ENCODE measurements at regions of chr10 and their contacts with region 1.

Region 1: DNA sequence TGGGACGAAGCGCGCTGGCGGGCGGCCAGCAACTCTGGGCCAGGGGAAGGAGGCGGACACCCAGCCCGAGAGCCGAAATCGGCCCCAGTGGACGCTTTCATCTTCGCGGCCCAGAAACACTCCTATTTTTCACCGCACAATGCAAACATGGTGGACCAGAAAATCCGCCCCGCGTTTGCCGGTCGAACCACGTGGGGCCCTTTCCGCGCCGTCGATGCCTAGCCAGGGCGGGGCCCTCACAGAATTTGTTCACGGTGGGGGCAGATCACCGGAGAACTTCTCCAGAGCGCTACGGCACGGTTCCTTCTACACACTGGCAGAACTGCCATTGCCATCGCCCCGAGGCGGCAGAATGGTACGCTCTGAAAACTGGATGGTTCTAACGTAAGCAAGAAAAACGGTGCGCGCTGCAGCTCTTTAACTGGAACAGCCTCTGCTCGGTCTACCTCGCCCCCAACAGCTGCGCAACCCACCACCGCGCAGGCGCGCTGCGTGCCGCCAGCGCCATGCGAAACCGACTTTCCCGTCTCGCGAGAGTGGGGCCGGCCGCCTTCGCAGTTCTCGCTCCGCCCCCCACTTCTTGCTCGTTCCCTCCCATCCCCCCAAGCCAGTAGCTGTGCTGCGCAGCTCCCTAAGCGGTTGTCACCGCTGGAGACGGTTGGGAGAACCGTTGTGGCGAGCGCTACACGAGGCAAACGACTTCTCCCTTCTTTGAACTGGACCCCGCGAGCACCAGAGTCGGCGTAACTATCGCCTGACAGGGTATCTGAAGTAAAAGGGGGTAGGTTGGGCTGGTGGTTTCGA is at the start of gene HNRNPH3:
- DNase-seq: peak; percentile 99
- ATAC-seq: peak; percentile 88
- H3K4me3 Mint-ChIP-seq: peak within 1 kb of the TSS; percentile 97
- H3K27ac Mint-ChIP-seq: peak within 1 kb of the TSS; percentile 100
- H3K4me1 Mint-ChIP-seq: peaks cover 41% of the 10 kb centered on the region
- H3K27me3 Mint-ChIP-seq: no peaks in the 10 kb centered on the region
- total RNA-seq, gene HNRNPH3: 126 to 157 TPM

Region 2: DNA sequence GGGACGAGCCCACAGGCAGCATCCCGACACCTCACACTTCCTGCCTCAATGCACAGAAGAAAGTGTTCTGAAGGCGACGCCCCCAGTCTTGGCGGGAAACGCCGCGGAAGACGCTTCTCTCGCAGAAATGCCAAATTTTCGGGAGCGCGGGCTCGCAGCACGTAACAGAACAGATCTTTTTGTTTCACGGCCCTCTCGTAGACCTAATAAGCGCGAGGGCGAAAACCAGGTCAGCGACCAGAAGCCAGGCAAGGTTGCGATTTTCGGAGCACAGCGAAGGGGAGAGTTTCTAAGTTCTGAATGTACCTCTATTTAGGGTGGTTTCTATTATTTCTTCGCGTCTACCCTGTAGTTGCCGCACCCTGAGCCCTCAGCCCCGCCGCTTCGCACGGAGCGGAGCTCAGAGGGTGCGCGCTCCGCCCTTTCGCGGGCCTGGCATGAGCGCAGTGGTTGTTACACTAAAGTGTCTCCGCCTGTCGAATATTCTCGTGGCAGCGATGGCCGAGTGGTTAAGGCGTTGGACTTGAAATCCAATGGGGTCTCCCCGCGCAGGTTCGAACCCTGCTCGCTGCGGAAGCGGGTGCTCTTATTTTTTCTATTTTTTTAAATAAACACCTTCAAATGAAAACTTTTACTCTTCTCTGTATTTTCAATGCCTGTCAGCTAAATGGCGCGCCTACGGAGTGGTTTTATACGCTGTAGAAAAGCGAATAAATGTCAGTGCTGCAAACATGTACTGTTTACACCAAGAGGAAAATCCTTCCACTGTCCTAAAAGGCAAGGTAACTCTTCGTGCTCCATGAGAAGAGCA is 567.4 kb before region 1 on chr10:
- CTCF ChIA-PET with region 1: no interaction called
- POLR2A ChIA-PET with region 1: no interaction called
- intact Hi-C with region 1: loop called in 1 of 2 experiments (anchors 1 kb)
- DNase-seq: peak; percentile 96
- ATAC-seq: peak; percentile 86
- H3K4me3 Mint-ChIP-seq: peak overlapping the region; percentile 86
- H3K27ac Mint-ChIP-seq: peak overlapping the region; percentile 99
- H3K4me1 Mint-ChIP-seq: peaks cover 15% of the 10 kb centered on the region
- H3K27me3 Mint-ChIP-seq: peaks cover 2% of the 10 kb centered on the region

Region 3: DNA sequence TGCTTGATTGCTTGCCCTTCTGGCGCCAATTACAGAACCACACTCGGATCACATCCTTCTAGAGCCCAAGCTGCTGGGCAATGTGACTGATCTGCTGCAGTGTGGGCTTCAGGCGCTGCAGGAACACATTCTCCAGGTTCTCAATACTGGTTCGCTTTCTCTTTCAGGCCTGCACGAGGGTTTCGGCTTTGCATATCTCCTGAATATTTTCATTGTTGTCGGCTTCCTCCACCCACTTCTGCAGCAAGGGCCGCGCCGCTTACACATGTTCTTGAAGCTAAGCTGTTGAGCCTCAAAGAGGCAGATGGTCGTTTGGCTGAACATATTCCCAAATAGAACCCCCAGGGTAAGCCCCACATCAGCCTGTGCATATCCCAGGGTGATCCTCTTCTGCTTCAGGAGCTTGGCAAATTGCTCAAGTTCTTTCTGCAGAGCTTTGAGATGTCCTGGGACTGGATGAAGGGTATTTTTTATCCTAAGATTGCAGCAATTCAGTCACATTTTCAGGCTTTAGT is 321.2 kb before region 1 on chr10:
- CTCF ChIA-PET with region 1: no interaction called
- POLR2A ChIA-PET with region 1: interaction called, 14 read pairs
- intact Hi-C with region 1: no loop called
- DNase-seq: no peak
- ATAC-seq: no peak
- H3K4me3 Mint-ChIP-seq: no peak overlapping the region
- H3K27ac Mint-ChIP-seq: no peak overlapping the region
- H3K4me1 Mint-ChIP-seq: no peaks in the 10 kb centered on the region
- H3K27me3 Mint-ChIP-seq: no peaks in the 10 kb centered on the region

Region 4: DNA sequence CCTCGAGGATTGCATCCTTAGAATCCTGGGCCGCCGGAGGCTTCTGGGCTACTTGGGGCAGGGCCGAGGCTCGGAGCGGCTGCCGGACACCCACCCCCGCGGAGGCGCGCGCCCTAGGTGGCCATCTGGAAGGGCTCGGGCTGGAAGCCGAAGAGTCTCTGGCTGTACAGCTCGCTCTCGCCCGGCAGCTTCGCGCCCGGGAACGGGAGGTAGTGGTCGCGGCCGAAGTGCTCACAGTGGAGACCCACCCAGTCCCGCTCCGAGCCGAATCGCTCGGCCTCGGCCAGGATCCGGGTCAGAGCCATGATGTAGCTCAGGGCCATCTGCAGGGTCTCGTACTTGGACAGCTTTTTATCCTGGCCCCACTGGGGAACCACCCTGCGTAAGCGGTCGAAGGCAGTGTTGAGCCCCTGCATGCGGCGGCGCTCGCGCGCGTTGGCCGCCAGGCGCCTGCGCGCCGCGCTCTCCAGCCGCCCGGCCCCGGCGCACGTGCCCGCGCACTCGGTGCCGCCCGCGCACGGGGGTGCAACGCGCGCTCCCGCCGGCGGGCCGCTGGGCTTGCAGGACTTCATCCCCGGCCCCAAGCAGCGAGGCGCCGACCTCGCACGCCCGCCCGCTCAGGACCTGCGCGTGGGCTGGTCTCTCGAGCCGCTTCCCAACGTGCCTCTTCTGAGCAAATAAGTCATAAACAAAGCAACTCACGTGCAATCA is 100.4 kb before region 1 on chr10:
- CTCF ChIA-PET with region 1: interaction called, 6 read pairs
- POLR2A ChIA-PET with region 1: no interaction called
- intact Hi-C with region 1: loop called in 1 of 2 experiments (anchors 1 kb)
- DNase-seq: peak; percentile 63
- ATAC-seq: peak; percentile 90
- H3K4me3 Mint-ChIP-seq: peak overlapping the region; percentile 65
- H3K27ac Mint-ChIP-seq: no peak overlapping the region
- H3K4me1 Mint-ChIP-seq: peaks cover 7% of the 10 kb centered on the region
- H3K27me3 Mint-ChIP-seq: peaks cover 37% of the 10 kb centered on the region

Region 5: GRCh38 chr10:68406815-68407548 is 75.3 kb after region 1 on chr10 and contains the start of gene RUFY2:
- CTCF ChIA-PET with region 1: no interaction called
- POLR2A ChIA-PET with region 1: no interaction called
- intact Hi-C with region 1: loop called (anchors 1 to 5 kb)
- DNase-seq: peak; percentile 86
- ATAC-seq: peak; percentile 95
- H3K4me3 Mint-ChIP-seq: peak within 1 kb of the TSS; percentile 83
- H3K27ac Mint-ChIP-seq: peak within 1 kb of the TSS; percentile 76
- H3K4me1 Mint-ChIP-seq: peaks cover 19% of the 10 kb centered on the region
- H3K27me3 Mint-ChIP-seq: no peaks in the 10 kb centered on the region
- total RNA-seq, gene RUFY2: 9.1 to 9.5 TPM

Region 6: GRCh38 chr10:68826764-68827591 is 495.3 kb after region 1 on chr10 and contains the start of gene STOX1:
- CTCF ChIA-PET with region 1: no interaction called
- POLR2A ChIA-PET with region 1: no interaction called
- intact Hi-C with region 1: loop called in 1 of 2 experiments (anchors 1 kb)
- DNase-seq: peak; percentile 81
- ATAC-seq: peak; percentile 89
- H3K4me3 Mint-ChIP-seq: peak within 1 kb of the TSS; percentile 72
- H3K27ac Mint-ChIP-seq: peak within 1 kb of the TSS; percentile 37
- H3K4me1 Mint-ChIP-seq: peaks cover 19% of the 10 kb centered on the region
- H3K27me3 Mint-ChIP-seq: no peaks in the 10 kb centered on the region
- total RNA-seq, gene STOX1: 0.74 to 0.87 TPM

Region 7: DNA sequence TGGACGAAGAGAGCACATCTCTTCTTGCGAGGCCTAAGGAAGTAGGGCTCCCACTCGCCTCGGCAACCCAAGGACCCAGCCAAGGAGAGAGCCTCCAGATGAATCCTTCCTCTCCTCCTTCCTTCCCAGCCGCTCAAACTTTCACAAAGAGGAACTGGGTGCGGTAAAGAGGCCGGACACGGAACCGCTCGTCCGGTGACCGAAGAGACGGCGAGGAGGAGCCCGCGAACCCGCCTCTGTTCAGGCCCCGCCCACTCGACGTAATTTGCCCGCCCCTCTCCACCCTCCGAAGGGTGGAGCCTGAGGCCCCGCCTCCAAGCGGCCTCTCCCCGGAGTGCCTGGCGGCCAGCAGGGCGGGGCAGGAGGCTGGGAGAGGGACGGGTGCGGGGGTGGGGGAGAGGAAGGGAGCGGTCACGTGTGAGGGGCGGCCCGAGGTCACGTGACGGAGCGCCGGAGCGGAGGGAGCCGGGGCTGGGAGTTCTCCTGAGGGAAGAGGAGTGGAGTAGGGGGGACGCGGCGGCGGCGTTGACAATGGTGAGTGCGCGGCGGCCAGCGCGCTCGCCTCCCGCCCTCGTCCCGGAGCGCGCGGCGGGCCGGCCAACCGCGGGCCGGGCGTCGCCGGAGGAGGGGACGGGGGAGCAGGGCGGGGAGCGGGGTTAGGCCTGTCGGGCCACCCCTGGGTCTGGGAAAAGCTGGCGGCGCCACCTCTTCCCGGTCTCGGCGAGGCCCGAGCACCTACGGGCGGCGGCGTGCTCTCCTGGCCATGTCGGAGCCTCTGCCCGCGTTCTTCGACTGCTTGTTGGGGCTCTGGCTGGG is 792.3 kb after region 1 on chr10 and contains the start of gene VPS26A:
- CTCF ChIA-PET with region 1: no interaction called
- POLR2A ChIA-PET with region 1: no interaction called
- intact Hi-C with region 1: loop called in 1 of 2 experiments (anchors 1 kb)
- DNase-seq: peak; percentile 100
- ATAC-seq: peak; percentile 95
- H3K4me3 Mint-ChIP-seq: peak within 1 kb of the TSS; percentile 90
- H3K27ac Mint-ChIP-seq: peak within 1 kb of the TSS; percentile 91
- H3K4me1 Mint-ChIP-seq: peaks cover 31% of the 10 kb centered on the region
- H3K27me3 Mint-ChIP-seq: no peaks in the 10 kb centered on the region
- total RNA-seq, gene VPS26A: 27.1 to 32.2 TPM

Measured in activated CD4-positive, alpha-beta T cell treated with anti-CD3 and anti-CD28 coated beads for 36 hours (primary cell).